Ovary (tissue), 10 donors: ENCODE measurements at regions of chr6 and their contacts with region 1.

Region 1: DNA sequence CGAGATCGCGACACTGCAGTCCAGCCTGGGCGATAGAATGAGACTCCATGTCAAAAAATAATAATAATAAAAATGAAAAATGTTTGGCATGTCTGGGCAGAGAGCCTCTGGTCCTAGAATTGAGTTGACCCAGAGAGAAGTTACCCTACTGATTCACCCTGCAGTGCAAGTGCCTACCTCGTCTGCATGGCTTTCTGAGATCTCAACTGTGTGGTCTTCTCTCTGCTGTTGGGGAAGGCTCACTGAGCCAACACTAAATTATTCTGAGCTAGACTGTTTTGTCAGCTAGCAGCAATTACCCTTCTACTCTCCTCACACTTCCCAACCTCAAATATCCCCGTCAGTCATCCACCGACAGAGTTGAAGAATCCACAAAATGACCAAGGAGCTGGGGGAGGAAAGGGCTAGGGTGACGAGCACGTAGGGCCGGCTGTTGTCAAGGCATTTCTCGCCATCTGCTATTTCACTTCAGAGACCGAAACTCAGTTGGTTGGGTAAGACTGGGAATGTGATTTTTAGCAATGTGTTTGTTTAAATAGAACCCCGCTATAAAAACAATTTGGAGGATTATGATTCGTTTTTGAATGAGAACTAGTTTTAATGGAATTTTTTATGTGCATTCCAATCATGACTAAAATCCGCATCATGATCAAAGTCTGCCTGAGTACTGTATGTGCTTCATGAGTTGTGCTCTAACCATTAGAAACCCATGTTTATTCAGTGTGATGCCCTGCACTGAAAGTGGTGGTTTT is 9.4 kb downstream of the MAS1 start:
- DNase-seq: no peak
- H3K4me3 ChIP-seq: no peak overlapping the region
- H3K27ac ChIP-seq: no peak overlapping the region
- H3K4me1 ChIP-seq: peaks cover 1% of the 10 kb centered on the region
- H3K27me3 ChIP-seq: no peaks in the 10 kb centered on the region
- CTCF ChIP-seq: no peak
- EP300 ChIP-seq: no peak
- POLR2A ChIP-seq: no peak

Region 2: DNA sequence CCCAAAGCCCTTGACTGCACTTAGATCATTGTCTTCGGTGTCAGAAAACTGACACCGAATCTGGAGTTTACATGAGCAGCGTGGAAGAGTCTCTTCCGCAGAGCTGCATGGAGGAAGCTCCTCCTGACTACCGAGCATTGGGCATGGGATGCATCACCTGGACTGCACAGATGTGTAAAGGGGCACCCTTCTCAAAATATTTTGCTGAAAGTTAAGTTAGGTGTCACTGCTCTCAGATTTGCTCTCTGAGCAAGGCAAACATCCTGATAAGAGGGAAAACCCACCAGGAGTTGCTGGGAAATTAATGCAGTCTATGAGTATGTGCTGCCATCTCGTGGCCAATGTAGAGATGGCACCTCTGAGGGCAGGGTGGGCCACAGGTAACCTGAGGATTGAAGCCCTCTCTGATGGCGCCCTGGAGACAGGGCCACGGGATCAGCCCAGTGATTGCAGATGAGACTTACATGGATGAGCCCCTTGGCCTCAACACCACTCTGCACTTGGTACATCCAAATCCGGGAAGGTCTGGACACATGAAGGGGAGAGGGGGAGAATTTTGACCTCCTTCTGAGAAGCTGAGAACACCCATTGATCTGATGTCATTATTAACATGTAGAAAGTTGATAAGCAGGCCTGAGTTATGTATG is 634.0 kb after region 1 on chr6:
- intact Hi-C with region 1: no loop called
- DNase-seq: peak; percentile 28 to 73 (median 68)
- H3K4me3 ChIP-seq: no peak overlapping the region
- H3K27ac ChIP-seq: no peak overlapping the region
- H3K4me1 ChIP-seq: peaks cover 2% of the 10 kb centered on the region
- H3K27me3 ChIP-seq: no peaks in the 10 kb centered on the region
- CTCF ChIP-seq: peak; percentile 81 to 86 (median 85)
- EP300 ChIP-seq: no peak
- POLR2A ChIP-seq: no peak

Region 3: DNA sequence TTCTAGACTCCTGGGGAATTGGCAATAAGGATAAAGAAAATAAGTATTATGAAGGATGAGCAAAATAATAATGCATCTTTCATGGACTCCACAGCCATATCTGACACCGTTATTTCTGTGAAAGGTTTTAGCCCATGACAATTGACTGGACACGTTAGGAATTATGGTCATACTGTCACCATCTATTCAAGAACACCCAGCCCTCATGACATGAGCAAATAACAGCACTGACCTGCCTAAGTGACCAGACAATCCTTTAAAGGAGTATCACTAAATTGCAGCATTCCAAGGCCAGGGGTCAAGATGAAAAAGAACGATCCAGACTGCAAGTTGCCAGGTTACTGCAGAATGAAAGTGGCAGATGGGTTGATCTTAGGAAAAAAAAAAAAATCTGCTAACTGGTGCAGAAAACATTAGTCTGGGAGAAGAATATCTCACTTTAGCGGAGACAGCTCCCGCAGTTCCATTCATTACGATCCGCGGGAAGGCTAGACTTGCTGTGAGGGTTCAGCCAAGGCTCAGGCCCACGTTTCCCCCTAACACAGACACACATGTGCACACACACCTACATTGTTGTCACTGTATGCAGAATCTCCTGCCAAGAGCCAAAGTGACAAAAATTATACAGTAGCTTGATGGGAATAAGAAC is 1611.4 kb after region 1 on chr6:
- intact Hi-C with region 1: loop called in 1 of 4 experiments (anchors 5 kb)
- DNase-seq: no peak
- H3K4me3 ChIP-seq: no peak overlapping the region
- H3K27ac ChIP-seq: no peak overlapping the region
- H3K4me1 ChIP-seq: no peaks in the 10 kb centered on the region
- H3K27me3 ChIP-seq: no peaks in the 10 kb centered on the region
- CTCF ChIP-seq: no peak
- EP300 ChIP-seq: no peak
- POLR2A ChIP-seq: no peak